ENCODE measurements at regions of chr15 and their contacts with region 1.

Region 1: DNA sequence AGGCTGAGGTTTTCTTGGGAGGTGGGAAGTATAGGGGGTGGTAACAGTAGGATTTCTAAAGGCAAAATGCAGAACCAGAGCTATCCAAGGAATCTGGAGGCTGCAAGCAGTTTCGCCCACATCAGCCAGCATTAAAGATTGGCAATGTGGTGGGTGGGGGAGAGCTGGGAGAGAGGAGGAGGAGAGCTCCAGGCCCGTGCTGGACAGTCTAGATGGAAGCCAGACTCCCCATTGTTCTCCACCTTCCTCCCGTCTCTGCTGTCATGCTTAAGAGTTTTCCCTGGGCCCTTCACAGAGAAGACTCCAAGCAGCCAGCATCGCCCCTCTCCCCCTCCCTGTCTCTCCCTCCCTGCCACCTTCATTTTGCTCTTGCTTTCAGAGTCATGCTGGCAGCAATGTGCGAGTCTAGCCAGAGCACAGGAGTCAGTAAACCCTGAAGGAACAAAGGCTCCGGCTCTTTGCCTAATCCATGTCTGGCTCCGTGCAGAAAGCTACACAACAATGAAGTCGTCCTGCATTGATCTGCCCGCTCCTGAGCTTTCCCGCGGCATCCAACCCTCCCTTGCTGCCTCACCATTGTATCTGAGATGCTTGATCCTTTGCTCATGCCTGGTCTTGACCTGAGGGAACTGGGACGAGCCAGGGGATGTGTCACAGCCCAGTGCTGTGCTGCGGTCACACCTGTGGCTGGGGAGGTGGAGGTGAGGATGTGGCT is 282.9 kb downstream of the NTRK3 start:
- DNase-seq: no peak
- H3K4me3 ChIP-seq: no peak overlapping the region
- H3K27ac ChIP-seq: no peak overlapping the region
- H3K4me1 ChIP-seq: no peaks in the 10 kb centered on the region
- H3K27me3 ChIP-seq: no peaks in the 10 kb centered on the region
- CTCF ChIP-seq: no peak
- POLR2A ChIP-seq: no peak

Region 2: GRCh38 chr15:88028024-88028423 is 54.4 kb after region 1 on chr15:
- intact Hi-C with region 1: no loop called
- DNase-seq: no peak
- H3K4me3 ChIP-seq: no peak overlapping the region
- H3K27ac ChIP-seq: no peak overlapping the region
- H3K4me1 ChIP-seq: no peaks in the 10 kb centered on the region
- H3K27me3 ChIP-seq: no peaks in the 10 kb centered on the region
- CTCF ChIP-seq: no peak
- POLR2A ChIP-seq: no peak

Region 3: GRCh38 chr15:88077296-88078020 is 103.8 kb after region 1 on chr15:
- intact Hi-C with region 1: loop called (anchors 10 kb)
- DNase-seq: no peak
- H3K4me3 ChIP-seq: no peak overlapping the region
- H3K27ac ChIP-seq: no peak overlapping the region
- H3K4me1 ChIP-seq: no peaks in the 10 kb centered on the region
- H3K27me3 ChIP-seq: no peaks in the 10 kb centered on the region
- CTCF ChIP-seq: no peak
- POLR2A ChIP-seq: no peak